Caco-2 (cell line): ENCODE measurements at regions of chr15 and their contacts with region 1.

Region 1: DNA sequence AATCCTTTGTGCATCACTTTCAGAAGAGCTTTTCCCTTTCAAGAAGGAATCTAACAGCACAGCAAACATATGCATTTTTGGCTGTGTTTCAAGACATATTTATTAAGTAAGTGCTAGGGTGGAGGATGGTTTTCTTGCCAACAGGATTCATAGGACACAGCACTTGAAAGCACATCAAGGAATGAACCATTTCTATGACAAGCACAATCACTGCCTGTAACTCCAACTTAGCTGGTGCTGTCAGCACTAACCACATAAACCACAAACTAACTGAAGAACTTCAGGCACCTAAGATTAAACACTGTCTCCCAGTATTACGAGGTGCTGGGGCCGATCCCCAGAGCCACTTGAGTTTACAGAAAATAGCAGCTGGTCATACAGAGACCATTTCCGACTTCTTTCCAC is 35.4 kb upstream of the SPRED1 start:
- DNase-seq: no peak
- H3K4me3 ChIP-seq: no peak overlapping the region
- H3K4me3 Mint-ChIP-seq: no peak overlapping the region
- H3K27ac Mint-ChIP-seq: peak overlapping the region; percentile 54
- H3K4me1 ChIP-seq: peaks cover 50% of the 10 kb centered on the region
- H3K4me1 Mint-ChIP-seq: peaks cover 24% of the 10 kb centered on the region
- H3K27me3 ChIP-seq: no peaks in the 10 kb centered on the region
- H3K27me3 Mint-ChIP-seq: no peaks in the 10 kb centered on the region
- CTCF ChIP-seq: no peak

Region 2: DNA sequence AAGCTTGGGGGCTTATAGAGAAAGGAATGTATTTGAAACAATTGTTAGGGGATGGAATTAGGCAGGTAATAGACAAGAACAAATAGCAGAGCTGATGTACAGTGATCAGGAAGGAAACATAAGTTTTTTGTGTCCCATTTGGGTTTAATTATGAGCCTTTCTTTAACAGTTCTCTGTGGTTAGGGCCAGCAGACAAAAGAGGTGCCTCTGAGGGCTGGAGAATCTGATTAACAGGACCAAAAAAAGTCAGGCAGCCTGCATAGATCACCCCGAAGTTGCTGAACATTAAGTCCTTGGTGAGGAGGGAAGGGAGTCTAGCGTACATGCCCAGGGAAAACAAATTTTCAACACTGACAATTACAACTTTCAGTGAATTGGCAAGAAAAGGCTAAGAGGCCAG is 53.1 kb before region 1 on chr15:
- CTCF ChIA-PET with region 1: no interaction called
- POLR2A ChIA-PET with region 1: no interaction called
- intact Hi-C with region 1: loop called (anchors 2 kb)
- DNase-seq: no peak
- H3K4me3 ChIP-seq: no peak overlapping the region
- H3K4me3 Mint-ChIP-seq: peak overlapping the region; percentile 66
- H3K27ac Mint-ChIP-seq: peak overlapping the region; percentile 78
- H3K4me1 ChIP-seq: peaks cover 41% of the 10 kb centered on the region
- H3K4me1 Mint-ChIP-seq: peaks cover 32% of the 10 kb centered on the region
- H3K27me3 ChIP-seq: no peaks in the 10 kb centered on the region
- H3K27me3 Mint-ChIP-seq: no peaks in the 10 kb centered on the region
- CTCF ChIP-seq: no peak

Region 3: DNA sequence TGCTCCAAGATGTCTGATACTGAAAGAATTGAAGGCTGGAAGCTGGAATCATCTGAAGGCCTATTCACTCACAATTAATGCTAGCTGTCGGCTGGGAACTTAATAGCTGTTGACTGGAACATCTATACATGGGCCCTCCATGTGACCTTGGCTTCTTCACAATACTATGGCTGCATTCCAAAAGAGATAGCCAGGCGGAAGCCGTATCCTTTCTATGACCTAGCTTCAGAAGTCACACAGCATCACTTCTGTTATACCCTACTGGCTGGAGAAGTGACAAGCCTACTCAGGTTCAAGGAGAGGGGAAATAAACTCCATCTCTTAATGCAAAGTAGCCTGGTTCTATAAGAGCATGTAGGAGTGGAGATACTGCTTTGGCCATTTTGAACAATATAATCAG is 15.5 kb before region 1 on chr15:
- CTCF ChIA-PET with region 1: no interaction called
- POLR2A ChIA-PET with region 1: no interaction called
- intact Hi-C with region 1: loop called (anchors 1 kb)
- DNase-seq: no peak
- H3K4me3 ChIP-seq: no peak overlapping the region
- H3K4me3 Mint-ChIP-seq: no peak overlapping the region
- H3K27ac Mint-ChIP-seq: no peak overlapping the region
- H3K4me1 ChIP-seq: no peaks in the 10 kb centered on the region
- H3K4me1 Mint-ChIP-seq: no peaks in the 10 kb centered on the region
- H3K27me3 ChIP-seq: no peaks in the 10 kb centered on the region
- H3K27me3 Mint-ChIP-seq: no peaks in the 10 kb centered on the region
- CTCF ChIP-seq: no peak